IMR-90 (cell line): ENCODE measurements at regions of chr12 and their contacts with region 1.

Region 1: DNA sequence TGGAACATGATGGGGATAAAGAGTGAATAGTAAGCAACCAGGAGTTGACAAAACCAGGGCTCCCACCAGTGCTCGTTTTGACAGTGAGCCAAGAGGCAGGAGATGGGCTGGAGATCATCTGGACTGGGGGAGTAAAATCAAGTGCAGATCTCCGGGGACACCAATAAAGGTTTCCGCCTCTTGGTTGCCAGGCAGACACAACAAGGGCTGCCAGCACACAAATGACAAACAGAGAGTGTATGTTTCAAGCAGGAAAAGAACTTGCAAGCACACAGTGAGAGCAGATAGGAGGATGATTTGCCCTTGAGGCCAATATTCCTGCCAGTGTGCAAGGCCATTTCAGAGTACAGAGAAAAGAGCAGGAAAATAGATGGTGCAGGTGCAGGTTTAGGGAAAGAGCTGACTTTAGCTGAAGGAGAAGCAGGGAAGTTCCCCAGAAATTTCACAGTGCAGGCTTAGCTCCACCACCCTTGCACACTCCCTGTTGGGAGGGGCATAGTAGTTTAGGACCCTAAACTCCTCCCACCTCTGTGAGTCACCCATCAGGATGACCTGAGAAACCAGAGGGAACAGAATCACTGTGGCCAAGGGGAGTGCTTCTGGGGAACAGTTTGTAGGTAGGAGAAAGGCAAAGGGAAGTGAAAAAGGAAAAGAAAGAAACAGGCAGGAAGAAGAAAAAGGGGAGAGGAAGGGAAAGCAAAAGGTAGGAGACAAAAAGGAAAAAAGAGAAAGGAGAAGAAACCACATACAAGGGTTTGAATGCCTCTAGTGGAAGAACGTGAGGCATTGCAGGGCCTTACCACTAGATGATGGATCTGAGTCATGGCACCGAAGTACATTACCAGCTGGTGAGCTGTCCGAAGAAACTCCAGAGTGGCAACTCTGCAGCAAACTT is 404.4 kb downstream of the SLC6A15 start:
- DNase-seq: peak; percentile 75
- ATAC-seq: peak; percentile 97
- H3K4me3 ChIP-seq: no peak overlapping the region
- H3K27ac ChIP-seq: no peak overlapping the region
- H3K4me1 ChIP-seq: peaks cover 2% of the 10 kb centered on the region; the same call in 1 of the 2 replicates
- H3K27me3 ChIP-seq: no peaks in the 10 kb centered on the region
- CTCF ChIP-seq: peak; percentile 45
- POLR2A ChIP-seq: no peak
- RAD21 ChIP-seq: peak; percentile 14; the same call in 1 of the 2 replicates

Region 2: GRCh38 chr12:84484796-84485195 is 23.4 kb before region 1 on chr12:
- CTCF ChIA-PET with region 1: no interaction called
- POLR2A ChIA-PET with region 1: no interaction called
- dilution Hi-C with region 1: no loop called
- in situ Hi-C with region 1: no loop called
- intact Hi-C with region 1: no loop called
- DNase-seq: no peak
- ATAC-seq: no peak
- H3K4me3 ChIP-seq: no peak overlapping the region
- H3K27ac ChIP-seq: no peak overlapping the region
- H3K4me1 ChIP-seq: no peaks in the 10 kb centered on the region
- H3K27me3 ChIP-seq: no peaks in the 10 kb centered on the region
- CTCF ChIP-seq: no peak
- POLR2A ChIP-seq: no peak
- RAD21 ChIP-seq: no peak

Region 3: GRCh38 chr12:84842406-84843013 is 334.3 kb after region 1 on chr12:
- CTCF ChIA-PET with region 1: no interaction called
- POLR2A ChIA-PET with region 1: no interaction called
- dilution Hi-C with region 1: no loop called
- in situ Hi-C with region 1: no loop called
- intact Hi-C with region 1: loop called (anchors 5 kb)
- DNase-seq: peak; percentile 51
- ATAC-seq: peak; percentile 73; the same call in 1 of the 2 replicates
- H3K4me3 ChIP-seq: no peak overlapping the region
- H3K27ac ChIP-seq: no peak overlapping the region
- H3K4me1 ChIP-seq: no peaks in the 10 kb centered on the region
- H3K27me3 ChIP-seq: no peaks in the 10 kb centered on the region
- CTCF ChIP-seq: peak; percentile 69
- POLR2A ChIP-seq: no peak
- RAD21 ChIP-seq: peak; percentile 78